ENCODE measurements at regions of chr17 and their contacts with region 1.

Region 1: GRCh38 chr17:49556223-49556971 is 19.3 kb upstream of the NXPH3 start:
- DNase-seq: peak; percentile 65 to 88 (median 74)
- ATAC-seq: peak; percentile 69 to 93 (median 88)
- H3K4me3 ChIP-seq: no peak overlapping the region
- H3K27ac ChIP-seq: no peak overlapping the region
- H3K4me1 ChIP-seq: peaks cover 0 to 8% (median 4%) of the 10 kb centered on the region in 12 donors
- H3K27me3 ChIP-seq: peaks cover 0 to 9% (median 0%) of the 10 kb centered on the region in 9 donors
- CTCF ChIP-seq: peak; percentile 95 to 100 (median 98)
- POLR2A ChIP-seq: no peak

Region 2: DNA sequence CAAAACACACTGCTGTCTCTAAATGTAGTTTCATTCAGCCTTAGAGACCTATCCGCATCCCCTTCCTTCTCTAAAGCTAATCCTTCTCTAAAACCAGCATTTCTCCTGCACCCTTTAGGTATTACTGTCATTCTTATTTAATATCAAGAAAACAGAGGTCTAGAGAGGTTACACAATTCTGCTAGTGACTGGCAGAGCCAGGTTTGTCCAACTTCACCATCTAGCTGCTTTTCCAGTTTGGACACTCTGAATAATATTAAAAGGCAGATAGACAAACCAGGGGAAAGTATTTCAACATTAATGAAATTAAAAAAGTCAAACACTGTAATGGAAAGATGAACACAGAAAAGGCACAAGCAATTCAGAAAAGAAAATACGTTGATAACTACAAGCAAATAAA is 250.5 kb before region 1 on chr17:
- intact Hi-C with region 1: loop called in 6 of 10 experiments (anchors 5 to 10 kb)
- DNase-seq: no peak
- ATAC-seq: no peak
- H3K4me3 ChIP-seq: no peak overlapping the region
- H3K27ac ChIP-seq: no peak overlapping the region
- H3K4me1 ChIP-seq: no peaks in the 10 kb centered on the region
- H3K27me3 ChIP-seq: no peaks in the 10 kb centered on the region
- CTCF ChIP-seq: no peak
- POLR2A ChIP-seq: no peak

Region 3: DNA sequence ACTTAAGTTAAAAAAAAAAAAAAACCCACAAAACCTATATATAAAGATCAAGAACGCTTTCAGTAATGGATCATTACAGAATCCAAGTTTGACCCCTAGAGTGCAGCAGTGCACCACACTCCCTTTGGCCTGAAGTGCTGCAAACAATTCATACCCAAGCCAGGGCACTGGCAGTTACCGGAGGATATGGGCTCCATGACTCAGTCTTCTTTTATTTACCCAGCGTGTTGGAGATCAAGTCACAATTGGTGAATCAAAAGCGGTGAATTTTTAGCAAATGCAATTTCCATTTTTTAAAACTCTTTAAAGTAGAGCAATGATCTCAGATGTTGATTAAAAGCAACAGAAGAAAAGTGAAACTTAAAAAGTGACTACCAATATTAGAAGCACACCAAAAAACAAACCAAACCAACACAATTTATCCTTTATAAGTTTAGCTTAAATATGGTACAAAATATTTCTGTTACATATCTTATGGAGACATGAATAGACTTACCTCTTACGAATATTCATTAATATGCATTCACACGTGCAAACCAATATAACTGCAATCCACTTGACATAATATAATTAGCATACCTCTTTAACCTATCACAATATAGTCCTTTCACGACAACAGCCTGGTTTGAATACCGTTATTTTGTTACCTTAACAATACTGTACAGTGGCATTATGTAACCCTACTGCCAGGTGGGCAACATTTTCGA is 240.7 kb before region 1 on chr17:
- intact Hi-C with region 1: loop called in 9 of 10 experiments (anchors 2 to 10 kb)
- DNase-seq: peak in 4 of 5 donors; percentile 68 to 71 (median 69)
- ATAC-seq: peak; percentile 92 to 99 (median 98)
- H3K4me3 ChIP-seq: peak overlapping the region in 3 of 12 donors; percentile 6 to 20 (median 7)
- H3K27ac ChIP-seq: peak overlapping the region in 1 of 12 donors; percentile 35
- H3K4me1 ChIP-seq: peaks cover 0 to 23% (median 0%) of the 10 kb centered on the region in 12 donors
- H3K27me3 ChIP-seq: no peaks in the 10 kb centered on the region
- CTCF ChIP-seq: peak; percentile 61 to 92 (median 82)
- POLR2A ChIP-seq: no peak

Region 4: GRCh38 chr17:49407981-49408501 is 148.4 kb before region 1 on chr17:
- intact Hi-C with region 1: loop called (anchors 2 to 10 kb)
- DNase-seq: peak; percentile 55 to 82 (median 67)
- ATAC-seq: peak in 3 of 4 donors; percentile 71 to 80 (median 77)
- H3K4me3 ChIP-seq: no peak overlapping the region
- H3K27ac ChIP-seq: peak overlapping the region in 1 of 12 donors; percentile 8
- H3K4me1 ChIP-seq: peaks cover 0 to 11% (median 0%) of the 10 kb centered on the region in 12 donors
- H3K27me3 ChIP-seq: no peaks in the 10 kb centered on the region
- CTCF ChIP-seq: peak; percentile 46 to 74 (median 62)
- POLR2A ChIP-seq: no peak

Region 5: DNA sequence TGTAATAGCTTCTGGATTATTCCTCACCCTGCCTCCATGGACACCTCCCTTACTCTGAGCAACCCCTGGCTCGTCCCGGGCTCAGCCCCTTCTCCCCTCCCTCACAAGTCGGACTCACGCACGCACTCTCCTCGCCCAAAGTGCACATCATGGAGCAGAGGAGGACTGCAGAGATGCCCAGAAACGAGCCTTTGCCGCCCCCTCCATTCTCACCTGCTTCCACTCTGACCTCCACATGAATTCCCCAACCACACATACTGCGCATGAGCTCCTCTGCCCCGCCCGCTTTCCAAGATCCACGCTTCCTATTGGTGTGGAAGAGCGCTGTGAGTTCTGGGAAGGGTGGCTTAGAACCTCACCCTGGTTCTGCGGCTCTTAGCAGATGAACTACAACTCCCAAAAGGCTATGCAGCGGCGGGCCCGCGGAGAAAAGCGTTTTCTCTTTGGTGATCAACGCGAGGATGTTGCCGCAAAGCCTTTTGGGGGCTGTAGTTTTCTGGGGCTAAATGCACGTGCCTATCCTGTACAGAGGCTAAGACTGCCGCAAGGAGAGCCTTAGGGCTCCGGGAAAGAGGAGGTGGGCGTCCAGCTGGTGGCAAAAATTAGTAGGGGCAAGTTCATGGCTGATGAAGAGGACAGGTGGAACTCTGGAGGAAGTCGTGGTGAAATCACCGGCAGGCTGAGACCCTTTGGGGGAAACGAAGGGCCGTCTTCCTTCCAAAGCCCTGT is 141.6 kb before region 1 on chr17 and contains the start of gene PHB1:
- intact Hi-C with region 1: loop called in 9 of 10 experiments (anchors 2 to 10 kb)
- DNase-seq: peak; percentile 96 to 97 (median 96)
- ATAC-seq: peak; percentile 100
- H3K4me3 ChIP-seq: peak within 1 kb of the TSS; percentile 64 to 97 (median 88)
- H3K27ac ChIP-seq: peak within 1 kb of the TSS in 10 of 12 donors; percentile 28 to 84 (median 64)
- H3K4me1 ChIP-seq: peaks cover 0 to 19% (median 15%) of the 10 kb centered on the region in 12 donors
- H3K27me3 ChIP-seq: no peaks in the 10 kb centered on the region
- CTCF ChIP-seq: no peak
- POLR2A ChIP-seq: peak in 1 of 2 donors; percentile 53
- total RNA-seq, gene PHB1: 125 to 264 (median 211) TPM

Region 6: DNA sequence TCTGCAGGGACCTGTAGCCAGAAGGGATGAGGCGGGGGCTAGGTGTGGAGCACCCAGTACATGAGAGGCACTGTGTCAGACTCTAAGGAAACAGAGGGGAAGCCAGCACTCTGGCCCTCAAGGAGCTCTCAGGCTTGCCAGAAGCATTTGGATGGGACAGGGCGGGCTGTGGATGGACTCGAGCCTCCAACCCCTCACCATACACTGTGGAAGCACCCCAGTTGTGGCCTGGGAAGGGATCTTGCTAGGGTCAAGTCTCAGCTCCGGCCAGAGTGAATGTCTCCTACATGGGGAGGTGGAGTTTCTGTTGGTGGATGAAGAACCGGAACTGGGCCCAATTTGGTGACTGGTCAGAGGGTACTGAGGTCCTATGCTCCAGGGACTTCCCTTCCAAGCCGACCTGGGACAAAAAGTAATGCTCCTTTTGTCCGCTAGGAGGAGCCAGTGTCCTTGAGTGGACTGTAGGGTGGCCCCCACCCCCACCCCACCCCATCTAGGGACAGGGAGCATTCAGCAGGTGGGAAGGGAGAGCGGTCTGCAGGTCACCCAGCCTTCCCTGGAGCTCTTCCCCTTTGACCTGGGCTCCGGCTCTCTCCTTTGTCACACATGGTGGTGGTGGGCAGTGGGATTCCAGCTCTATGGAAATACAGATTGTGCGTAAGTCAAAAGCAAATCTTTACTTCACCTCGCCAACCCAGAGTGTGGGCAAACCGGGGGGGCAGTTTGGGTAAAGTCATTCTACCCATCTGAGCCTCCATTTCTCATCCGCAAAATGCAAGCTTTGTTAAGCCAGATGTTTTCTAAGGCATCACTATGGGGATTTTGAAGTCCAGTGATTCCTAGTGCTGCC is 121.4 kb before region 1 on chr17:
- intact Hi-C with region 1: loop called in 8 of 10 experiments (anchors 1 to 5 kb)
- DNase-seq: peak in 1 of 5 donors; percentile 19
- ATAC-seq: peak; percentile 53 to 76 (median 66)
- H3K4me3 ChIP-seq: no peak overlapping the region
- H3K27ac ChIP-seq: no peak overlapping the region
- H3K4me1 ChIP-seq: no peaks in the 10 kb centered on the region
- H3K27me3 ChIP-seq: peaks cover 2 to 30% (median 19%) of the 10 kb centered on the region in 9 donors
- CTCF ChIP-seq: peak; percentile 53 to 80 (median 73)
- POLR2A ChIP-seq: no peak

Region 7: GRCh38 chr17:49482144-49482817 is 74.1 kb before region 1 on chr17:
- intact Hi-C with region 1: no loop called
- DNase-seq: no peak
- ATAC-seq: no peak
- H3K4me3 ChIP-seq: no peak overlapping the region
- H3K27ac ChIP-seq: no peak overlapping the region
- H3K4me1 ChIP-seq: peaks cover 0 to 11% (median 0%) of the 10 kb centered on the region in 12 donors
- H3K27me3 ChIP-seq: peaks cover 3 to 88% (median 26%) of the 10 kb centered on the region in 9 donors
- CTCF ChIP-seq: no peak
- POLR2A ChIP-seq: no peak

Region 8: GRCh38 chr17:49496183-49496866 is 60.1 kb before region 1 on chr17:
- intact Hi-C with region 1: loop called in 9 of 10 experiments (anchors 2 to 5 kb)
- DNase-seq: peak; percentile 76 to 90 (median 82)
- ATAC-seq: peak; percentile 63 to 88 (median 79)
- H3K4me3 ChIP-seq: peak overlapping the region; percentile 29 to 76 (median 56)
- H3K27ac ChIP-seq: peak overlapping the region in 3 of 12 donors; percentile 5 to 32 (median 22)
- H3K4me1 ChIP-seq: peaks cover 0 to 38% (median 25%) of the 10 kb centered on the region in 12 donors
- H3K27me3 ChIP-seq: peaks cover 17 to 70% (median 49%) of the 10 kb centered on the region in 9 donors
- CTCF ChIP-seq: peak; percentile 68 to 94 (median 88)
- POLR2A ChIP-seq: no peak

Region 9: GRCh38 chr17:49525831-49526741 is 30.3 kb before region 1 on chr17:
- intact Hi-C with region 1: no loop called
- DNase-seq: peak in 3 of 5 donors; percentile 43 to 76 (median 56)
- ATAC-seq: peak in 3 of 4 donors; percentile 59 to 79 (median 73)
- H3K4me3 ChIP-seq: no peak overlapping the region
- H3K27ac ChIP-seq: peak overlapping the region in 3 of 12 donors; percentile 4 to 29 (median 5)
- H3K4me1 ChIP-seq: peaks cover 0 to 28% (median 0%) of the 10 kb centered on the region in 12 donors
- H3K27me3 ChIP-seq: peaks cover 0 to 46% (median 0%) of the 10 kb centered on the region in 9 donors
- CTCF ChIP-seq: no peak
- POLR2A ChIP-seq: no peak

Region 10: GRCh38 chr17:49667854-49668253 is 111.5 kb after region 1 on chr17:
- intact Hi-C with region 1: no loop called
- DNase-seq: no peak
- ATAC-seq: no peak
- H3K4me3 ChIP-seq: no peak overlapping the region
- H3K27ac ChIP-seq: peak overlapping the region in 1 of 12 donors; percentile 34
- H3K4me1 ChIP-seq: peaks cover 0 to 57% (median 36%) of the 10 kb centered on the region in 12 donors
- H3K27me3 ChIP-seq: no peaks in the 10 kb centered on the region
- CTCF ChIP-seq: no peak
- POLR2A ChIP-seq: no peak